Dorsolateral prefrontal cortex (tissue), 120 donors: ENCODE measurements at regions of chr5 and their contacts with region 1.

Region 1: GRCh38 chr5:159915904-159916840 is at the start of gene ADRA1B:
- DNase-seq: peak in 9 of 10 donors; percentile 26 to 79 (median 62)
- H3K4me3 ChIP-seq: peak within 1 kb of the TSS; percentile 17 to 71 (median 56)
- H3K27ac ChIP-seq: peak within 1 kb of the TSS in 28 of 59 donors; percentile 9 to 74 (median 50)
- H3K27me3 ChIP-seq: peaks cover 0 to 7% (median 0%) of the 10 kb centered on the region in 45 donors
- CTCF ChIP-seq: peak in 54 of 56 donors; percentile 24 to 83 (median 54)
- total RNA-seq, gene ADRA1B: 3.9 to 24.3 (median 12.5) TPM

Region 2: GRCh38 chr5:159444441-159445082 is 471.6 kb before region 1 on chr5:
- intact Hi-C with region 1: loop called (anchors 5 kb)
- DNase-seq: no peak
- H3K4me3 ChIP-seq: no peak overlapping the region
- H3K27ac ChIP-seq: no peak overlapping the region
- H3K27me3 ChIP-seq: no peaks in the 10 kb centered on the region
- CTCF ChIP-seq: peak in 51 of 56 donors; percentile 15 to 71 (median 51)

Region 3: DNA sequence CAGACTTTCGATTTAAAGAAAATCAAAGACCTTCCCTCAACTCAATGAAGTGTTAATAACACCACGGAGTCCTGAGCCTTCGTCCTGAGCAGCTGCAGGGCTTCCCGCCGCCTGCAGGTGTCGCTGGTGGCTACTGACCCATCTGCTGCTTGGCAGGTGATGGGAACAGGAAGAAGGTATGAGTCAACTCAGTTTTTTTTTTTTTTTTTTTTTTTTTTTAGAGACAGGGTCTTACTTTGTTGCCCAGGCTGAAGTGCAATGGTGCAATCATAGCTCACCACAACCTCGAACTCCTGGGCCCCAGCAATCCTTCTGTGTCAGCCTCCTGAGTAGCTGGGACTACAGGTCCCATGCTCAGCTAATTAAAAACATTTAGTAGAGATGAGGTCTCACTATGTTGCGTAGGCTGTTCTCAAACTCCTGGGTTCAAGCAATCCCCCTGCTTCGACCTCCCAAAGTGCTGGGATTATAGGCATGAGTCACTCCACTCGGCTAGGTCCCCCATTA is 400.2 kb before region 1 on chr5:
- intact Hi-C with region 1: loop called (anchors 2 to 10 kb)
- DNase-seq: peak in 6 of 10 donors; percentile 14 to 65 (median 44)
- H3K4me3 ChIP-seq: no peak overlapping the region
- H3K27ac ChIP-seq: no peak overlapping the region
- H3K27me3 ChIP-seq: peaks cover 0 to 5% (median 0%) of the 10 kb centered on the region in 45 donors
- CTCF ChIP-seq: peak in 54 of 56 donors; percentile 31 to 70 (median 57)

Region 4: DNA sequence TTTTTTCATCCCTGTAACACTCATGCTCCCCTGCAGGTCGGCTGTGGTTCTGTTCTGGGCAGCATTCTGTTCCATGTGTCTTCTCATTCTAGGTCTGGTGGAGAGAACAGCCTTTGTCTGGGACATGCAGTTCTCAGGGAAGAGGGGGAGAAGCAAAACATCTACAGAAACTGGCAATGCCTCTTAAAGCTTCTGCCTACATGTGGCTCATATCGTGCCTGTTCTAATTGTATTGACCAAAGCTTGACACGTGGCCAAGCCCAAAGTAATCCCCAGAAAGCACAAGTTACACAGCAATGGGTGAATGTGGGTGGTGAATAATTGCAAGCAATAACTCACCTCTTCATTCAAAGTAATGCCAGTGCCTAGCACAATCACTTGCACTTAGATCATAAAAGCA is 367.7 kb before region 1 on chr5:
- intact Hi-C with region 1: loop called in 1 of 2 experiments (anchors 10 kb)
- DNase-seq: peak in 3 of 10 donors; percentile 25 to 53 (median 30)
- H3K4me3 ChIP-seq: no peak overlapping the region
- H3K27ac ChIP-seq: peak overlapping the region in 10 of 59 donors; percentile 6 to 69 (median 34)
- H3K27me3 ChIP-seq: no peaks in the 10 kb centered on the region
- CTCF ChIP-seq: no peak

Region 5: GRCh38 chr5:160981914-160982313 is 1065.7 kb after region 1 on chr5:
- intact Hi-C with region 1: no loop called
- DNase-seq: no peak
- H3K4me3 ChIP-seq: no peak overlapping the region
- H3K27ac ChIP-seq: no peak overlapping the region
- H3K27me3 ChIP-seq: no peaks in the 10 kb centered on the region
- CTCF ChIP-seq: no peak